ENCODE measurements at regions of chr2 and their contacts with region 1.

Region 1: DNA sequence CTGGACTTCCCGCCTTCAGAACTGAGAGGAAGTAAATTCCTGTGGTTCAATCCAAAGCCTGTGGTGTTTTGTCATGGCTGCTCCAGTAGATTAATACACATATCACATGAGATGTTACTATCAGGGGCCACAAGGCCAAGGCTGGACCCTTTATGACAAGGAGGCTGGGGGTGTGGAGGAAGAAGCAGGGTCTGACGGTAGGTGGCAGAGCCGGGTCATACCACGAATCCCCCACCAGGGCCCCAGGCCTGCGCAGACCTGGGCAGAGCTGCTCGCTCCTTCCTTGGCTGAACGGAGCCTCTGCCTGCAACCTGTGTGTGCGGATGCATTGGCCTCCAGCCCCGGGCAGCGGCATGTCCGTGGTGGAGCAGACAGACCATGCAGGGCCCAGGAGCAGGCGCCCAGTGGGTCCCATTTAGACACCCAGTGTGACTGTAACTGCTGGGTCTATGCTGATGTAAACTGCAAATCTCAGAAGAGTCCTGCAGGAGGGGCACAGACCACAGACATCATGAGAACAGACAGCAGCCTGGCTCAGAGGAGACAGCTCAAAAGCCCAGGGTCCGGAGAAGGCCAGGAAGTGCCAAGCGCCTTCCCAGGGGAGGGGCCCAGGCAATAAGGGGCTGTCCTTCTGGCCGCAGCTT is 155.2 kb downstream of the PXDN start:
- DNase-seq: no peak
- ATAC-seq: peak; percentile 34
- H3K4me3 Mint-ChIP-seq: no peak overlapping the region
- H3K27ac Mint-ChIP-seq: no peak overlapping the region
- H3K4me1 Mint-ChIP-seq: no peaks in the 10 kb centered on the region
- H3K27me3 Mint-ChIP-seq: peaks cover 21% of the 10 kb centered on the region
- CTCF ChIP-seq: no peak

Region 2: DNA sequence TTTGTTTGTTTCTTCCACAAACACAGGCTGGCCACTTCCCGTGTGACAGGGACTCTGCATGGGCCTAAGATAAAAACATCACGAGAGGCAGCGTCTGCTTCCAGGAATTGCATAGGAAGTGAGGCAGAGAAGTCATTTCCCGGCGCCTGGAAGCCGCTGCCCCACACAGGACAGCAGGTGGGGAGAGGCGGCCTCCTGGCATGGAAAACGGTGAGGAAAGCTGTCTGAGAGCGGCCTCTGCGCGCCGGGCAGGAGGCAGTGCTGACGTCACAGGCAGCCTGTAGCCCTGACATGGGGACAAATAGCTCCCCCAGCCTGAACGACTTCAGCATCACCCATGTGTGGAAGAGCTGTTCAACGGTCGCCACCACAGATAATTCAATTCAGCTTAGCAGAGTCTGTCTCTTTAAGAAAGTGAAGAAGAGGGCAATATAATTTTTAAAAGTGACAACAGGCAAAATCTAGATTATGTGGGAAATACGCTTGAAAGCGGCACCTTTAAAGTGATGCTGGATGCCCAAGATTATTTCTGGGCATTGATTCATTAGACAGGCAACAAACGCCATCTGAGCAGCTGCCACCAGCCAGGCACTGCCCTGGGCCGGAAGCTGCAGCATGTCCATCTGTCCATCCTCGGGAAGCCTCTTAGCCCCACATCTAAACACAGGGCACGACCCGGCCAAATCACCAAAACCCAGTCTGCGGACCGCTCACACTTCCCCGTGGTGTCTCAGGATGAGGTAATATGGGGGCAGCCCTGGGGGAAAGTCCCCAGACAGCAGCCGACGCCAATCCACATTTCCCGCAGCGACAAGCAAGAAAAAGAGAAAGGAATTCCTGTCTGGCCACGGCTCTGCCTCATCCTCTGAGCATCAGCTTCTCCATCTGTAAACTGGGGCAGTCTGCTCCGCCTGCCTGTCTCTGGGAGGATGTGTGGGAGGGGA is 16.3 kb after region 1 on chr2:
- CTCF ChIA-PET with region 1: no interaction called
- POLR2A ChIA-PET with region 1: no interaction called
- intact Hi-C with region 1: no loop called
- DNase-seq: no peak
- ATAC-seq: no peak
- H3K4me3 Mint-ChIP-seq: no peak overlapping the region
- H3K27ac Mint-ChIP-seq: no peak overlapping the region
- H3K4me1 Mint-ChIP-seq: peaks cover 33% of the 10 kb centered on the region
- H3K27me3 Mint-ChIP-seq: no peaks in the 10 kb centered on the region
- CTCF ChIP-seq: no peak

Region 3: GRCh38 chr2:1750933-1751766 is 162.1 kb after region 1 on chr2:
- CTCF ChIA-PET with region 1: interaction called, 4 read pairs
- POLR2A ChIA-PET with region 1: no interaction called
- intact Hi-C with region 1: loop called (anchors 1 kb)
- DNase-seq: no peak
- ATAC-seq: peak; percentile 60
- H3K4me3 Mint-ChIP-seq: no peak overlapping the region
- H3K27ac Mint-ChIP-seq: no peak overlapping the region
- H3K4me1 Mint-ChIP-seq: peaks cover 4% of the 10 kb centered on the region
- H3K27me3 Mint-ChIP-seq: peaks cover 32% of the 10 kb centered on the region
- CTCF ChIP-seq: no peak

Region 4: GRCh38 chr2:1817256-1818051 is 228.4 kb after region 1 on chr2:
- CTCF ChIA-PET with region 1: no interaction called
- POLR2A ChIA-PET with region 1: no interaction called
- intact Hi-C with region 1: loop called (anchors 2 kb)
- DNase-seq: peak; percentile 45
- ATAC-seq: peak; percentile 57
- H3K4me3 Mint-ChIP-seq: no peak overlapping the region
- H3K27ac Mint-ChIP-seq: no peak overlapping the region
- H3K4me1 Mint-ChIP-seq: peaks cover 2% of the 10 kb centered on the region
- H3K27me3 Mint-ChIP-seq: no peaks in the 10 kb centered on the region
- CTCF ChIP-seq: peak; percentile 86